ENCODE measurements at regions of chr16 and their contacts with region 1.

Region 1: DNA sequence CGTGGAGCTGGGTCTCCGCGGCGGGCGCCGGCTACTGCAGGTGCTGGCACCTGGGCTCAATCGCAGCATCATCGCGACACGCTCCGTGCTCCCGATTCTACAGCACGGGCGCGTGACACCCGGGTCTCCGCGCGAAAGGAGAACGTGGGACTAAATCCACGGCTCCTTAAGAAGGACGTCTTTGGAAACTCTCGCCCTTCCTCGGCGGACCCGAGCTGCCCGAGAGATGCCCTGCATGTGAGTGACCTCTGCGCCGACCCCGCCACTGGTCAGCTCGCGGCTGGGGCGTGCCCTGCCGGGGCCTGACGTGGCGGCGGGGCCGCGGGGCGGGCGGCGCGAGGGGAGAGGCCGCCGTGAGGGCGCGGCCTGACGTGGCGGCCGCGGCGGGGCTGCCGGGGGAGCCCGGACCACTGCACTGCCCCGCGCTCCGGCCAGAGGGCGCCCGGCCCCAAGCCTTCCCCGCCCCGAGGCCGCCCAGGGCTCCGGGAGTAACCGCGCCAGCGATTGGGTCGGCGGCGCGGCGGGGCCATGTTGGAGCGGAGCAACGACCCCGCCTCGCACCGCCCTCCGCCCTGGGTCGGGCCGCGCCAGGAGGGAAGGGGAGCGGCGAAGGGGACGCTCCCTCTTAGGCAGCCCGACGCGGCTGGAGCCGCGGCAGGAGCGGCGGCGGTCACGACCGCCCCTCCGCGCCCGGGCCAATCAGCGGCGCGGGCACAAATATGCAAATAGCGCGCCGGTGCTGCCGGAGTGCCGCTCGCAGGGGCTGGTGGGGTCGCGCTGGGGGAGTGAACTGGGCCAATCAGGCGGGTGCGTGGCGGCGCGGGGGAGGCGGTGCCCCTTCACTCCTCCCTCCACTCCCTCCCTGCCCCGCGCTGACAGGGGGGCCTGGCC is 75.6 kb downstream of the CHD9 start:
- DNase-seq: peak; percentile 88 to 99 (median 96)

Region 2: DNA sequence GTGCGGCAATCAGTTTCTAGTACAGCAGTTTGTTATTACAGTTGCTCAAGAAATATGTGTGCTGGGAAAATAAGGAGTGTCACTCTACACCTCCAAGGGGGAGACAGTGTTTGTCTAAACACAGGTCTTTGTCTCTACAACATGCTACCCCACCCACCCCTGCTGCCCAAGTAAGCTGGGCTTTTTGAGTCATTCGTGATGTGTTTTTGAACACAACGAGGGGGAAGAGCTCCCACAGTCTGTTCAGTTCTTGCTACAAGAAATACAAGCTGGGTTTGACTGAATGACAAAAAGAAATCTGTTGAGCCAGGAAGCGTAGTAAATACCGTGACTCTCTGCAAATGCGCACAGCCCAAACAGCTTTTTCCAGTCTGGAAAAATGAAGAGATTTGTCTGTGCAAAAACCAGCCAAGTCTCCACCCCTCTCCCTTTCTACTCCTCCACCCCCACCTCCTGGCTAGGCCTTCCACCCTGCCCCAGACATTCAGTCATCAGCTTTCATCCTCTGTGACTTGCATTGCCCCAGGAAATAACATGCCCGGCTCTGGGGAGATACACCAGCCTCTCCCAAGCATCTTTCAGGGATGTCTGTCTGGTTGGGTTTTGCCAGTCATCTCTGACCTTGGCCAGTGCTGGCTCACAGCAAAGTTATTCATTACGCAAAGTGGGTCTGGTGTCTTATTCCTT is 49.9 kb before region 1 on chr16:
- intact Hi-C with region 1: no loop called
- DNase-seq: peak in 14 of 42 donors; percentile 11 to 65 (median 36)

Region 3: DNA sequence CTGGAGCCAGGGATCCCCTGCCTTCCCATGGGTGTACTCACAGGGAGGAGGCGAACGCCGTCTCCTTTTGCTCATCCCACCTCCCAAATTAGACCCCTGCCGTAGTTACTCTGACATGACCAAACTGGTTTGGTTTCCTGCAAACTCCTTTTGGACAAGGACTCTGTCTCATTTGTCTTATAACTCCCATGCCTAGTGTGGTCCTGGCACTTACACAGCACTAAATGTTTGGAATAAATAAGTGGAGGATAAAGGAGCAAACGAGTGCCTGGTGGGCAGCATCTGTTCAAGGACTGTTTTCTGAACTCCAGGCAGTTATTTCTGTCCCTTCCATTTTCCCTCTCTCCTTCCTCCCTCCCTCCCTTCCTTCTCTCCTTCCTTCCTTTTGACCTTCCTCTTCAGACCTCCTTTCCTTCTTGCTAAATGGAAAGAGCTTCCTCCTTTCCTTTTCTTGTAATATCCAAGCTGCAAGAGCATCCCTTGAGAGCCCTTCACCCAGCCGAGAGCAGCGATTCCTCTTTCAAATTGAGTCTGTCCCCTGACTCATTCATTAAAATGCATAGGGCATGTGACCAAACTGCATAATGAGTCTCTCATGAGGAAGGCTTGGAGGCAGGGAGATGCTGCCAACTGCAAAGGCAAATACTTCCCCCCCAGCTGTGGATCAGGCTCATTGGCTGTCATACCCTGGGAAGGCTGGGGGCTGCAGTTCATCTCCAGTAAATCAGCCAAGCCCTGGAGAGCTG is 38.8 kb before region 1 on chr16:
- intact Hi-C with region 1: loop called (anchors 5 kb)
- DNase-seq: peak; percentile 60 to 98 (median 88)

Region 4: GRCh38 chr16:53207810-53208752 is 77.7 kb after region 1 on chr16:
- intact Hi-C with region 1: loop called (anchors 5 kb)
- DNase-seq: peak; percentile 10 to 87 (median 64)

Region 5: GRCh38 chr16:53323924-53324323 is 193.5 kb after region 1 on chr16:
- intact Hi-C with region 1: no loop called
- DNase-seq: peak in 1 of 42 donors; percentile 9

Measured in head of caudate nucleus (tissue), 42 donors.